Sciatic nerve (tissue), 2 donors: ENCODE measurements at regions of chr6 and their contacts with region 1.

Region 1: GRCh38 chr6:157944983-157945931 is 36.4 kb upstream of the SYNJ2 start:
- DNase-seq: no peak
- ATAC-seq: peak; percentile 56

Region 2: DNA sequence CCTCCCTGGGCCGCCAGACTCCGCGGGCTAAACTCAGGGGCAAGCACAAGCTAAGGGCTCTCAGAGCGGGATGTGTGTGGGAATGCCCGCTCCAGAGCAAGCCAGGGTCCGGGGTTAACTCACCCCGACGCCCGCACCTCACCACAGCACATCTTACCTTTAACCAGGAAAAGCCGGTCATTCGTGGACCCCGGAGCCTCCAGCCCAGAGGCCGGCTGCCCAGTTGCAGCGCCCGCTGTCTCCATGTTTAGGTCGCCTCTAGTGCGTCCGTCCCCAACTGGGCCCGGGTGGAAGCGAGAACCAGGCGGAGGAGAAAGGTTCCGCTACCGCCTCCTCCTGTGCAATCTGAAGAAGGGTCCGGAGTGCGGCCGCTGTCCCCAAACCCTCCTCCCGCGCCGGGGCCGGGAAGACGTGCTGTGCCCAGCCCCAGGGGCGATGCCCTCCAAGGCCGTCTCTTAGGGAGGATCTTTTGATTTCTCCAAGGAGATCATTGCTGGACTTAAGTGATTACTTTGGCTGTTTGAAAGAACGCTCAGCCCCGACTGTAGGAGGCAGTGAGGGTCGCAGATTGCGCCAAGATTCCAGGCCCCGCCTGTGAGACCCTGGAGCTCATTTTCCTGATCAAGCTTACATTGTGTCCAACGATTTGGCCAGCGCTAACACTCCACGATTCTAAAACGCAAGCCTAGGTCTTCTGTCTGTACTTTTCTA is 621.8 kb before region 1 on chr6 and contains the start of gene TMEM242:
- intact Hi-C with region 1: loop called (anchors 5 kb)
- DNase-seq: peak; percentile 92
- ATAC-seq: peak; percentile 99
- total RNA-seq, gene TMEM242: 13.2 TPM

Region 3: GRCh38 chr6:157921685-157922367 is 23.4 kb before region 1 on chr6:
- intact Hi-C with region 1: no loop called
- DNase-seq: no peak
- ATAC-seq: peak; percentile 95